GM12878 (cell line): ENCODE measurements at regions of chr14 and their contacts with region 1.

Region 1: DNA sequence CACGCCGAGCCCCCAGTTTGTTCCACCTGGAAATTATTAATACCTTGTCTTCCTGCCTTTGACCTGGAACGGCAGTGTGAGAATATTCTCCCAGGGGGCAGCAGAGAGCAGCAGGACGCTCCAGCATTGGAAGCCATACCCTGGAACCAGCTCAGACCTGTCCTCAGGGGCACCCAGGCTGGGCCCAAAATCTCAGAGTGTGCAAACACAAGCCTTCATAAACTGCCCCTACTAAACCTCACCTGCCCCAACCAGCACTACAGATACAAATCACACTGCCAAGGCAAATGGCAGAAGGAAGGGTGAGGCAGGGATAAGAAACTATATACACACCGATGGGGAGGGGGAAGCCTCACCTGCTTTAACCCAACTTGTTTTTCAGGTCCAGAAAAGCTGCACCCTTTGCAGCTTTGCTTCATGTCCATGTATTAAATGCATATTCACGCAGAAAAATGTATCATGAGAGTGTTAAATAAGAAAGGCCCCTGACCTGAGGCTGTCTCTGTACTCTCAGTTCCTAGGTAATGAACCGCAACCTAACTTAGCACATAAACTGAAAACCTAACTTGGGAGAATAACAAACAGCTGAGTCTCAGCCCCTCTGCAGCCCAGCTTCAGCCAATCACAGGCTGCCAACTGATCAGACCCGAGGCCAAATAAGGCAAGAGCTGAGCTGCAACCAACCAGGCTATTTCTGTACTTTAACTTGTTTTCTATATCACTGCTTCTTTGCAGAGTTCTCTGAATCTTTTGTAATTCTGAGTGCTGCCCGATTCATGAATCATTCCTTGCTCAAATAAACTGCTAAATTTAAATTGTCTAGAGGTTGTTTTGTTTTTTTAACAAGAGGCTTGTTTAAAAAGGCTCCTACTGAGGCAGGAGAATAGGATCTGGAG is 130.1 kb downstream of the SPTSSA start:
- DNase-seq: peak; percentile 80
- ATAC-seq: peak; percentile 98
- H3K4me3 ChIP-seq: peak overlapping the region; percentile 12; the same call in 1 of the 2 replicates
- H3K27ac ChIP-seq: peak overlapping the region; percentile 90
- H3K4me1 ChIP-seq: peaks cover 15% of the 10 kb centered on the region
- H3K27me3 ChIP-seq: no peaks in the 10 kb centered on the region
- CTCF ChIP-seq: peak; percentile 76 to 86 (median 84)
- EP300 ChIP-seq: no peak
- POLR2A ChIP-seq: 0 out of 2 replicates have a peak, but pooled peaks have one; percentile 14
- RAD21 ChIP-seq: peak; percentile 84

Region 2: GRCh38 chr14:34345718-34346465 is 13.9 kb after region 1 on chr14:
- CTCF ChIA-PET with region 1: interaction called, 11 read pairs
- POLR2A ChIA-PET with region 1: no interaction called
- RAD21 ChIA-PET with region 1: interaction called, 4 read pairs
- SMC1A ChIA-PET with region 1: interaction called, 9 read pairs
- in situ Hi-C with region 1: no loop called
- intact Hi-C with region 1: no loop called
- DNase-seq: no peak
- ATAC-seq: no peak
- H3K4me3 ChIP-seq: no peak overlapping the region
- H3K27ac ChIP-seq: no peak overlapping the region
- H3K4me1 ChIP-seq: no peaks in the 10 kb centered on the region
- H3K27me3 ChIP-seq: no peaks in the 10 kb centered on the region
- CTCF ChIP-seq: no peak
- EP300 ChIP-seq: no peak
- POLR2A ChIP-seq: no peak
- RAD21 ChIP-seq: no peak

Region 3: DNA sequence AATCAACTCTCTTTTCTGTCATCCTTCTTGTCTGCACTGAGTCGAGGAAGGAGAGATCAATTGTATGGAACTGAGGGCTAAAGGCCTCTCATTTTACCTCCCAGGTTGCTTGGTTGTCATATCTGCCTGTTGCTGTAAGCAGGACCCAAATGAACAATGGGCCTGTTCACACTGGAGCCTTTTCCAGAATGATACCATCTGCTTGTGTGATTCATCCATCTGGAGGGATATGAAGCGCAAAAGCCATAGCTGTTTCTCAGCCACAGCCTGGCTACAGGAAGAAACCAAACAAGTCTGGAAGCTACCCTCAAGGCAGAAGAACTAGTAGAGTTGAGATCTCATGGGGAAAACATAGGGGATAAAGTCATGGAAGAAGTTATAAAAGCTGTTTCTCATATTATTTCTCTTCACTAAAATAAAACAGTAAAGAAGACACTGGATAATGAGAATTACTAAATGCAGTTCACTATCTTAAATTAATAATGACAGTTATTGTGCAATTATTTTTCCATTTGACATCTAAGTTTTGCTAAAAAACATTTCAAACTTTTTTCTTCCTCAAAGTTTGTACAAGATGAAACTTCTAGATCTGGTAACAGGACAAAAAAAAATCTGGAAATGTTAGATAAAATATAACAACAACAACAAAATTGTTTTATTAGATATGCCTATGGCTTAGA is 23.7 kb after region 1 on chr14:
- CTCF ChIA-PET with region 1: interaction called, 11 read pairs
- POLR2A ChIA-PET with region 1: no interaction called
- RAD21 ChIA-PET with region 1: interaction called, 3 read pairs
- SMC1A ChIA-PET with region 1: interaction called, 3 read pairs
- in situ Hi-C with region 1: no loop called
- intact Hi-C with region 1: no loop called
- DNase-seq: no peak
- ATAC-seq: no peak
- H3K4me3 ChIP-seq: no peak overlapping the region
- H3K27ac ChIP-seq: no peak overlapping the region
- H3K4me1 ChIP-seq: no peaks in the 10 kb centered on the region
- H3K27me3 ChIP-seq: no peaks in the 10 kb centered on the region
- CTCF ChIP-seq: no peak
- EP300 ChIP-seq: no peak
- POLR2A ChIP-seq: no peak
- RAD21 ChIP-seq: no peak

Region 4: GRCh38 chr14:34380464-34380845 is 48.5 kb after region 1 on chr14:
- CTCF ChIA-PET with region 1: no interaction called
- POLR2A ChIA-PET with region 1: no interaction called
- RAD21 ChIA-PET with region 1: no interaction called
- SMC1A ChIA-PET with region 1: no interaction called
- in situ Hi-C with region 1: no loop called
- intact Hi-C with region 1: no loop called
- DNase-seq: no peak
- ATAC-seq: no peak
- H3K4me3 ChIP-seq: no peak overlapping the region
- H3K27ac ChIP-seq: no peak overlapping the region
- H3K4me1 ChIP-seq: no peaks in the 10 kb centered on the region
- H3K27me3 ChIP-seq: 0 out of 4 replicates have a peak, but pooled peaks cover 0 to 3% of the 10 kb centered on the region in 2 experiments
- CTCF ChIP-seq: no peak
- EP300 ChIP-seq: no peak
- POLR2A ChIP-seq: no peak
- RAD21 ChIP-seq: no peak

Region 5: GRCh38 chr14:34461334-34462131 is 129.6 kb after region 1 on chr14:
- CTCF ChIA-PET with region 1: interaction called, 5 read pairs
- POLR2A ChIA-PET with region 1: no interaction called
- RAD21 ChIA-PET with region 1: interaction called, 6 read pairs
- SMC1A ChIA-PET with region 1: interaction called, 7 read pairs
- in situ Hi-C with region 1: no loop called
- intact Hi-C with region 1: loop called (anchors 5 kb)
- DNase-seq: no peak
- ATAC-seq: peak; percentile 60
- H3K4me3 ChIP-seq: peak overlapping the region; percentile 91
- H3K27ac ChIP-seq: peak overlapping the region; percentile 78
- H3K4me1 ChIP-seq: no peaks in the 10 kb centered on the region
- H3K27me3 ChIP-seq: no peaks in the 10 kb centered on the region
- CTCF ChIP-seq: no peak
- EP300 ChIP-seq: no peak
- POLR2A ChIP-seq: no peak
- RAD21 ChIP-seq: no peak

Region 6: GRCh38 chr14:34496679-34497513 is 164.9 kb after region 1 on chr14:
- CTCF ChIA-PET with region 1: interaction called, 28 read pairs
- POLR2A ChIA-PET with region 1: interaction called, 3 read pairs
- RAD21 ChIA-PET with region 1: interaction called, 19 read pairs
- SMC1A ChIA-PET with region 1: interaction called, 19 read pairs
- in situ Hi-C with region 1: no loop called
- intact Hi-C with region 1: loop called (anchors 1 kb)
- DNase-seq: no peak
- ATAC-seq: no peak
- H3K4me3 ChIP-seq: no peak overlapping the region
- H3K27ac ChIP-seq: no peak overlapping the region
- H3K4me1 ChIP-seq: no peaks in the 10 kb centered on the region
- H3K27me3 ChIP-seq: no peaks in the 10 kb centered on the region
- CTCF ChIP-seq: no peak
- EP300 ChIP-seq: no peak
- POLR2A ChIP-seq: no peak
- RAD21 ChIP-seq: no peak

Region 7: DNA sequence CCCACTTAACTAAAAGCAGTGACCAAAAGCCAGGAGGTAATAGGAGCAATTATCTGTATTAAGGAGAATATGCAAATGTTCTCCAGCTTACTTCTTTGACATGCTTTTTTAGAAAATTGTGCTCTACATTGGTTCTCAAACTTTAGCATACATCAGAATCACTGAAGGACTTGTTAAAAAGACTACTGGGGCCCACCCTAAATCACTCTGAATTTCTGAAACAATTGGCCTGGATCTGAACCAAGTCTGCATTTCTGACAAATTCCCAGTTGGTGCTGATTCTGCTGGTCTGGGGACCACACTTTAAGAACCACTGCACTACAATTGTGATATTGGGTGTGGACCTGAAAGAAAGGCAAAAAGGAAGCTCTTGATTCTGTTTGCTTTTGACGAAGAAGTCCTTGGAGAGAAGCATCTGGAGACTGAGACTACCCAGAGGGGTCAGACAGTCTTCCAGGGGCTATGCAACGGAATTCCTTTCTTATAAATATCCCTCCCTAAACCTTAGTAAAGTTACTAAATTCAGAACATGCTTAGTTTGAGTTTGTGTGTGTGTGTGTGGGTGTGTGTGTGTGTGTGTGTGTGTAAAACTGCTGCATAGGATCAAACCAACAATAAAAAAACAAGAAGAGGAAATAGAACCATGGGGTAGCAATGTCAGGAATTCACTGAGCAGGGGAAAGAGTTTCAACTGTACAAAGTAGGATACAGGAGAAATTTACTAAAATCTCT is 170.7 kb after region 1 on chr14:
- CTCF ChIA-PET with region 1: interaction called, 28 read pairs
- POLR2A ChIA-PET with region 1: interaction called, 3 read pairs
- RAD21 ChIA-PET with region 1: interaction called, 19 read pairs
- SMC1A ChIA-PET with region 1: interaction called, 19 read pairs
- in situ Hi-C with region 1: no loop called
- intact Hi-C with region 1: loop called (anchors 1 kb)
- DNase-seq: no peak
- ATAC-seq: no peak
- H3K4me3 ChIP-seq: no peak overlapping the region
- H3K27ac ChIP-seq: no peak overlapping the region
- H3K4me1 ChIP-seq: no peaks in the 10 kb centered on the region
- H3K27me3 ChIP-seq: no peaks in the 10 kb centered on the region
- CTCF ChIP-seq: no peak
- EP300 ChIP-seq: no peak
- POLR2A ChIP-seq: no peak
- RAD21 ChIP-seq: no peak

Region 8: GRCh38 chr14:34539407-34540180 is 207.6 kb after region 1 on chr14 and contains the start of gene EAPP:
- CTCF ChIA-PET with region 1: interaction called, 5 read pairs
- POLR2A ChIA-PET with region 1: no interaction called
- RAD21 ChIA-PET with region 1: interaction called, 5 read pairs
- SMC1A ChIA-PET with region 1: interaction called, 7 read pairs
- in situ Hi-C with region 1: no loop called
- intact Hi-C with region 1: loop called (anchors 5 kb)
- DNase-seq: peak; percentile 80
- ATAC-seq: peak; percentile 100
- H3K4me3 ChIP-seq: peak within 1 kb of the TSS; percentile 88
- H3K27ac ChIP-seq: peak within 1 kb of the TSS; percentile 77
- H3K4me1 ChIP-seq: 0 out of 2 replicates have a peak, but pooled peaks cover 3% of the 10 kb centered on the region
- H3K27me3 ChIP-seq: no peaks in the 10 kb centered on the region
- CTCF ChIP-seq: no peak
- EP300 ChIP-seq: no peak
- POLR2A ChIP-seq: peak; percentile 95
- RAD21 ChIP-seq: no peak
- polyA plus RNA-seq, gene EAPP: 84.9 to 94.6 TPM